OCI-LY7 (cell line): ENCODE measurements at regions of chr1 and their contacts with region 1.

Region 1: DNA sequence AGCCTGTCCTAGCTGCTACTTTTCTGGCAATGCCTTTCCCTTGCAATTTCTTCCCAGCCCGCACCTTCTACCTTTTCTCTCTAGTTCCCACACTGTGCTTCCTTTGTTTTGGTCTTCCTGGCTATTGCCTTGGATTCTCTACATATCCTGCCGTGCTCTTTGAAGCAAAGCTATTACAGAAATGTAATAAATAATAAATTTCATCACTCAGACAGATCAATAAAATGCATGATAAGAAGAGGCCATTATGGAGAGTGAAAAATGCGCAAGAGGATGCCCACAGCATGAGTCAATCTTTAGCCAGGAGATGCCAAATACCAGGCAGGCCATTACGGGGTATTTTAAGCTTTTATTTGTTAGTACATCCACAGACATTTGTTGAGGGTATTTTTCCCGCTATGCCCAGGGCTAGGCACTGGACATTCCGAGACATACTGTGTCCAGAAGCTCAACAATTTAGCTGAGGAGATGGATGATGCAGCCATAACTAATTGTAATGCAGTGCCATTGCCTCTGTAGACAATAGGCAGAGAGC is 163.6 kb downstream of the ST6GALNAC3 start:
- DNase-seq: no peak
- H3K4me3 ChIP-seq: no peak overlapping the region
- H3K27ac ChIP-seq: no peak overlapping the region
- H3K4me1 ChIP-seq: peaks cover 16% of the 10 kb centered on the region
- CTCF ChIP-seq: no peak

Region 2: GRCh38 chr1:75884437-75884836 is 353.7 kb before region 1 on chr1:
- CTCF ChIA-PET with region 1: no interaction called
- POLR2A ChIA-PET with region 1: no interaction called
- intact Hi-C with region 1: no loop called
- DNase-seq: no peak
- H3K4me3 ChIP-seq: no peak overlapping the region
- H3K27ac ChIP-seq: no peak overlapping the region
- H3K4me1 ChIP-seq: no peaks in the 10 kb centered on the region
- CTCF ChIP-seq: no peak

Region 3: DNA sequence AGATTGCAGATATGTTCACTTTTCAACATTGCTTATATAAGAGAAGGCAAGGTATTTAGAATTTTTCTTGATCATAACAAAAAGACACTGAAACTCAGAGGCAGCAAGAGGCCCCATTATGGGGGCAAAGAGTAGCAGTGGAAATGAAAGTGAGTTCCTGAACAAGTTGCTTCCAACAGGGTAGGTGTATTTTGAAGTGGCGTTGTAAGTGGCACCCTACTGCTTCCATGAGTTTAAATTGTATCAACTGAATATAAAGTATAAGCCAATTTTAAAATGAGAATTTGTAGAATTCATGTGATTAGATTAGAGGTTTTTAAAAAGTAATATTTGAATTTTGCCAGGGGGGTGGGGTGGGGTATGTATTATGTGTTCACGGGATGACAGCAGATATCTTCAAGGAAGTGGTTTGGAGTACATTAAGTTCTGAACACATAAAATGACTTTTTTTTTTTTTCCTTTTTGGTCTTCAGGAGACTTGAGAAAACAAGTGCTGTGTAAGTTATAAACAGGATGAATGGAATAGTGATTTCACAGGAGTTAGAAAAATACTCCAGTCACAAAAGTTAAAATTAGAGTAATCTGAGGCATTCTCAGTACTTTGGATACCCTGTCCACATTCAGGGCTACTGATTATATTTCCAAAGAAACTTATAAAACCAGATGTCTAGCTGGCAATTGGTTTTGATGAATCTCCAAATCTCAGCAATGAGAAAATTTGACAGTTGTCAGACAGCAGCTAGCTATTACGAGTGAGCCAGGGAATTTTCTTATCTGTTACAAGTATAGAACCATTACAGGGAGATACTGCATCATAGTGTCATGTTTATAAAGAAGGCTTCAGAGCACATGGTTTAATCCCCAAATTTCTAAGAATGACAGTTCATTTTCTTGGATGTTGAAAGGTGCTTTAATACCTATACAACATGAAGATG is 18.4 kb after region 1 on chr1:
- CTCF ChIA-PET with region 1: no interaction called
- POLR2A ChIA-PET with region 1: interaction called, 3 read pairs
- intact Hi-C with region 1: loop called (anchors 1 kb)
- DNase-seq: no peak
- H3K4me3 ChIP-seq: no peak overlapping the region
- H3K27ac ChIP-seq: no peak overlapping the region
- H3K4me1 ChIP-seq: peaks cover 14% of the 10 kb centered on the region
- CTCF ChIP-seq: no peak